A673 (cell line): ENCODE measurements at regions of chr10 and their contacts with region 1.

Region 1: GRCh38 chr10:102280397-102281101 is 35.2 kb downstream of the GBF1 start:
- DNase-seq: peak; percentile 41
- H3K4me3 ChIP-seq: peak overlapping the region; percentile 1
- H3K27ac ChIP-seq: peak overlapping the region; percentile 33
- H3K4me1 ChIP-seq: peaks cover 17% of the 10 kb centered on the region
- H3K27me3 ChIP-seq: no peaks in the 10 kb centered on the region
- CTCF ChIP-seq: no peak

Region 2: DNA sequence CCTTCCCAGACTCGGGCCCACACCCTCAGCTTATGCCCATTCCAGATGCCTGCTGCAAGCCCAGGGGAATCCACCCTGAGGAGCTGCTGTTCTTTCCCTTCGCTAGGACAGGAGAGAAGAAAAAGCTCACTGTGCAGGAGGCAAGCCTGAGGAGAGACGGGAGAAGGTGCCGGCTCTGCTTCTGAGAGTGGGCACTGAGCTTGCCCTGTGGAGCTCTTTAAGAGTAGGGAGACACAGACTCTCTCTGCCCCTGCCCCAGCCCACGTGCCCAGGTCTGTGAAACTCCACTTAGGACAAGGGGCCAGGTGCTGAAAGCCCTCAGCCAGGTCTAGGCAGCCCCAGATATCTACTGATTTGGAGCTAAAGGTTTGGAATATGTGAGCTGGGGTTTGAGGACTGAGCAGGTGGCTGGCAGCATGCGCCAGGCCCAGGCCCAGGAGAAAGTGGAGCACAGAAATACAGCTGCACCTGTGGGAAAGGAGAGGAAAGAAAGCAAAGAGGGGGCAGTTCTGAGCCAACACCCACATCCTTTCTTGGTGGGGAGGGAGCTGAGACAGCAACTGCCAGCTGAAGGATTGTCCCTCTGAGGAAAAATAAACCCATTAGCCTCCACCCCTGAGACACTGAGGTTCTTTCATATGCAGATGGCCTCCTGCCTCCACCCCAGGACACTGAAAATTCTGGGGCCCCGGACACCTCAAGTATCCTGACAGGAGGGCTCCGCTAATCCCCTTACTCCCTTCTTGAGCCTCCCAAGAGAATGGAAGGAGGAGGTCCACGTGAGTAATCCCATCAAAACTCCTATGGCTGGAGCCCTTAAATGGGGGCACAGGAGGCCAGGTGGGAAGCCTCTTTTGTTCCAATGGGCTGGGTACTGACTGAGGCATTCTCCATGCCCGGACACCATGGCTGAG is 699.8 kb before region 1 on chr10:
- CTCF ChIA-PET with region 1: no interaction called
- POLR2A ChIA-PET with region 1: interaction called, 10 read pairs
- intact Hi-C with region 1: no loop called
- DNase-seq: no peak
- H3K4me3 ChIP-seq: no peak overlapping the region
- H3K27ac ChIP-seq: no peak overlapping the region
- H3K4me1 ChIP-seq: no peaks in the 10 kb centered on the region
- H3K27me3 ChIP-seq: no peaks in the 10 kb centered on the region
- CTCF ChIP-seq: no peak

Region 3: DNA sequence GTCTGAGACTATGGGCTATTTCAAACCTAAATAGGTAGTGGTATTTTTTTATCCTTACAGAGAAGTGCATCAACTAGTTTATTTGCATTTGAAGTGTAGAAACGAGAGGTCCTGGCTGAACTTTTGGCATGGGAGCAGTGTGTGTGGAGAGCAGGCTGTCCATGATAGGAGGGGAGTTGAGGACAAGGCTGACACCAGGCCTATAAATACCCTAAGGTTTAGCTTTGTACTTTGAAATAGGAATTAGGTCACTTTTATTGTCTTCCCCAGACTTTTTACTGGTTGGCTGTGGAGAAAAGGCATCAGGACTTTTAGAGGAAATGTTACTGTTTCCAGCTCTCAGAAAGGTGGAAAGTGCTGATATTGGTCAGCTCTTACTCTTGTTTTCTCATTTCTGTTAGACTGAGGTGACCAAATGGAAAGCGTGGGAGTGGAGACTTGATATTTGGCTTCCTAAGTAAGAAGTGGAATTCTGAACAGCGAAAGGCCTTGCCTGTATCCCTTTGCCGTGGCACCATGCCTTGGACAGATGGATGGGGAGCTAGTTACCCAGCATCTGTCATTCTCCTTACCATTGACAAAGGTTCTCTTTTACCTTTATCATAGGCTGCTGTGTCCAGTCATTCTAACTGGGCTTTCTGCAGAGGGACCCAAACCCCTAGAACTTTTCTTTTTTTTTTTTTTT is 10.8 kb after region 1 on chr10:
- CTCF ChIA-PET with region 1: no interaction called
- POLR2A ChIA-PET with region 1: no interaction called
- intact Hi-C with region 1: no loop called
- DNase-seq: no peak
- H3K4me3 ChIP-seq: no peak overlapping the region
- H3K27ac ChIP-seq: no peak overlapping the region
- H3K4me1 ChIP-seq: no peaks in the 10 kb centered on the region
- H3K27me3 ChIP-seq: no peaks in the 10 kb centered on the region
- CTCF ChIP-seq: no peak